H1 (cell line): ENCODE measurements at regions of chr10 and their contacts with region 1.

Region 1: DNA sequence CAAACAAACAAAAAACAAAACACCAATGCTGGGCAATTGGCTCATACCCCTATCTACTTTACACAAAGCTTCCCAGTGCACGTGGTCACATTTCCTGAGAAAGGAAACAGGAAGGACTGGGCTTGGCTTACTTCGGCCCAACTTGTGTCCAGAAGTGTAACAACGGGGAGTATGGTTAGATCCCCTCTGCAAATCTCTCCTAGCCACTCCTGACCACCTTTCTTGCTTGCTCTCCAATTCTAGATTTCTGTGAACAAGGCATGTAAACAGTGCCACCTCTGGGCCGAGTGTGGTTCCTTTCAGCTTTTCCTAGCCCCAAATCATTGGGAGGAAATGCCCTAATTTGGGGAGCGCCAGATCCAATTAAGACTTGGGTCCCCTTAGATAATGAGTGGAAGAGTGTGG is 21.0 kb upstream of the FRAT2 start:
- DNase-seq: peak in 1 of 2 experiments; percentile 58
- H3K4me3 ChIP-seq: no peak overlapping the region
- H3K27ac ChIP-seq: no peak overlapping the region
- H3K4me1 ChIP-seq: peaks cover 0 to 3% (median 1%) of the 10 kb centered on the region in 4 experiments; a peak in 3 of 7 replicates
- H3K27me3 ChIP-seq: no peaks in the 10 kb centered on the region
- CTCF ChIP-seq: peak; percentile 20 to 81 (median 80)
- EP300 ChIP-seq: no peak
- POLR2A ChIP-seq: no peak
- RAD21 ChIP-seq: peak; percentile 87 to 89

Region 2: DNA sequence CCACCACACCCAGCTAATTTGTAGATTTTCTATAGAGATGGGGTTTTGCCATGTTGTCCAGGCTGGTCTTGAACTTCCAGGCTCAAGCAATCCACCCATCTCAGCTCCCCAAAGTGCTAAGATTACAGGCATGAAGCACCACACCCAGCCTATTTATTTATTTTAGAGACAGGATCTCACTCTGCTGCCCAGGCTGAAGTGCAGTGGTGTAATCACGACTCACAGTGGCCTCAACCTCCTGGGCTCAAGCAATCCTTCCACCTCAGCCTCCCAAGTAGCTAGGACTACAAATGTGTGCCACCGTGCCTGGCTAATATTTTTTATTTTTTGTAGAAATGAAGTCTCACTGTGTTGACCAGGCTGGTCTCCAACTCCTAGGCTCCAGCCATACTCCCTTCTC is 14.2 kb before region 1 on chr10:
- CTCF ChIA-PET with region 1: interaction called, 24 read pairs
- POLR2A ChIA-PET with region 1: interaction called, 6 read pairs
- DNase-seq: no peak
- H3K4me3 ChIP-seq: no peak overlapping the region
- H3K27ac ChIP-seq: no peak overlapping the region
- H3K4me1 ChIP-seq: peaks cover 5 to 7% (median 6%) of the 10 kb centered on the region in 4 experiments
- H3K27me3 ChIP-seq: no peaks in the 10 kb centered on the region
- CTCF ChIP-seq: no peak
- EP300 ChIP-seq: no peak
- POLR2A ChIP-seq: no peak
- RAD21 ChIP-seq: no peak